Activated CD4-positive, alpha-beta memory T cell treated with anti-CD3 and anti-CD28 coated beads for 36 hours (primary cell): ENCODE measurements at regions of chr2 and their contacts with region 1.

Region 1: DNA sequence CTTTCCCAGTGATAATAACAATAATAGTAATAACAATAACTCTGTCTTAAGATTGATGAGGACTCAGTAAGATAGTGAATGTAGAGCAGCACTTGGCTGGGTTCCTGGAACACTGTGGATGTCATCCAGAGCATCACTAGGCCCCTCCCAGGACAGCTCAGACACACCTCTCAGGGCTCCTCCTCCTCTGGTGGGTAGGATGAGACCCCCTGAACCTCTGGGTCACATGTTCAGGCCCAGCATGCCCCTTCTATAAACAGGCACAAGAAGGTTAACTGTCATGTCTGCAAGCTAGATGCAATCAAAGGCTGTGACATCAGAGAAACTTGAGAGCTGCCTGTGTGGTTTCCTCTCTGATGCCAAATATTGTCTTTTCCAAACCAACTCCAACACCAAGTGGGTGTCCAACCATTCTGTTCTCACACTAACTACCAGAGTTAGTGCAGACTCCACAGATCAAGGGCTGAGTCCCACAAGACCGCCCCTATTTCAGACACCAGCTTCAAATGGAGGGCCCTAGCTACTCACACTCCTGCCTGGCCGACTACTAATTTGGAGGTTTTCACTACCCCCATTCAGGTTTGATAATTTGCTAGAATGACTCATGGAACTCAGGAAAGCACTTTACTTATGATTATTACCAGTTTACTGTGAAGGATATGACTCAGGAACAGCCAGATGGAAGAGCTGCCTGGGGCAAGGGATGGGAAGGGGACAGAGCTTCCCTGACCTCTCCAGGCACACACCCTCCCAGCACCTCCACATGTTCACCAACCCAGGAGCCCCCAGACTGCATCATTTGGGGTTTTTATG is 46.4 kb upstream of the BZW1 start:
- DNase-seq: peak; percentile 75
- H3K4me3 Mint-ChIP-seq: peak overlapping the region; percentile 42
- H3K27ac Mint-ChIP-seq: peak overlapping the region; percentile 96
- H3K4me1 Mint-ChIP-seq: peaks cover 32% of the 10 kb centered on the region
- H3K27me3 Mint-ChIP-seq: no peaks in the 10 kb centered on the region

Region 2: GRCh38 chr2:200670313-200670712 is 95.0 kb before region 1 on chr2:
- CTCF ChIA-PET with region 1: no interaction called
- POLR2A ChIA-PET with region 1: no interaction called
- intact Hi-C with region 1: no loop called
- DNase-seq: no peak
- H3K4me3 Mint-ChIP-seq: no peak overlapping the region
- H3K27ac Mint-ChIP-seq: no peak overlapping the region
- H3K4me1 Mint-ChIP-seq: peaks cover 7% of the 10 kb centered on the region
- H3K27me3 Mint-ChIP-seq: peaks cover 5% of the 10 kb centered on the region

Region 3: DNA sequence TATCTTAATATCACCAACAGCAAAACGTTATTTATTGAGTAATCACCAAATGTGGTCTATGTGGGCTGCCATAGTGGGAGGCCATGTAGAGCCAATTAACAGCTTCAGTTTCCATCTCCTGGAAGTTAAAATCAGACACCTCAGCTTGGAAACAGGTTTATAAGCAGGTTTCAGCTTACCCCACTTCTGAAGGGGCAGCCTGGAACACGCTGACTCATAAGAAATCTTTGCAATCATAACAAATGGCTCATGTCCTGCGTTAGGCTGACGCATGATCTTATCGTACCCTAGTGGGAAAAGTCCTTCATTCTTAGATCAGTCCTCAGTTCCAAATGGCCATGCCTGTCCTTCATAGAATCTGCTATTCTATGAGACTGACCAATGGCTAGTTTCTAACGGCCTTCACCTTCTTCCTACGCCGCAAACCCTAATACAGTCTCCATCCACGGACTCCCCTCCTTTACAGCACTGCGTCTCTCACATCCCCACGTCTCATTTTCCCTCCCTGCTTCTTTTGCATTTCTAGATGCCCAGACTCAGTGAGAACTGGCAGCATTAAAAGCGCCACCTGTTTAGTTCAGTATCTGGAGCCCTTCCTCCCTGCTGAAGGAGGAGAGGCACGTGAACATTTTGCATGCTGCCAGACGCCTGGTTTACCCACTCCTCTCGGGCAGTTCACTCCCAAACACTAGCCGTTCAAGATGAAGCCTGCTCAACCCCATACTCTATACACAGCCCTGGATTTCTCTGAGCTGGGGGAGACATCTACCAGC is 22.2 kb after region 1 on chr2:
- CTCF ChIA-PET with region 1: no interaction called
- POLR2A ChIA-PET with region 1: no interaction called
- intact Hi-C with region 1: loop called (anchors 1 kb)
- DNase-seq: peak; percentile 52
- H3K4me3 Mint-ChIP-seq: no peak overlapping the region
- H3K27ac Mint-ChIP-seq: peak overlapping the region; percentile 26
- H3K4me1 Mint-ChIP-seq: peaks cover 16% of the 10 kb centered on the region
- H3K27me3 Mint-ChIP-seq: peaks cover 4% of the 10 kb centered on the region

Region 4: DNA sequence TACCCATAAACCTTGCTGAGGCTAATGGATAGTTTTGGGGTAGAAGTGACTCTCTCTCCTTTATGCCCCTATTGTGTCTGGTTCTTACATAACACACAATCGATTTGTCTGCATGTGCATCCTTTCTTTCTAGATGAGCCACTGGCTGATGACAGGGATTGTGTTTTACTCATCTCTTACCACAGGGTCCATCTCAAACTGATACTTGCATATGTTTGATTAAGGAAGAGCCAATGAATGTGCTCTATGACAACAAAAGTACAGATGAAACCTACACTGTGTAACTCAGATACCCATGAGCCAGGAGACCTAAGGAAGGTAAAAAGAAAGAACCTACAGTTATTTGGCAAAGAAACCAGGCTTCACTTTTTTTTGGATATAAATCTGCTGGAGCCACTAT is 33.2 kb after region 1 on chr2:
- CTCF ChIA-PET with region 1: no interaction called
- POLR2A ChIA-PET with region 1: interaction called, 4 read pairs
- intact Hi-C with region 1: loop called (anchors 1 kb)
- DNase-seq: peak; percentile 18
- H3K4me3 Mint-ChIP-seq: no peak overlapping the region
- H3K27ac Mint-ChIP-seq: no peak overlapping the region
- H3K4me1 Mint-ChIP-seq: peaks cover 4% of the 10 kb centered on the region
- H3K27me3 Mint-ChIP-seq: no peaks in the 10 kb centered on the region